ENCODE measurements at regions of chr7 and their contacts with region 1.

Region 1: DNA sequence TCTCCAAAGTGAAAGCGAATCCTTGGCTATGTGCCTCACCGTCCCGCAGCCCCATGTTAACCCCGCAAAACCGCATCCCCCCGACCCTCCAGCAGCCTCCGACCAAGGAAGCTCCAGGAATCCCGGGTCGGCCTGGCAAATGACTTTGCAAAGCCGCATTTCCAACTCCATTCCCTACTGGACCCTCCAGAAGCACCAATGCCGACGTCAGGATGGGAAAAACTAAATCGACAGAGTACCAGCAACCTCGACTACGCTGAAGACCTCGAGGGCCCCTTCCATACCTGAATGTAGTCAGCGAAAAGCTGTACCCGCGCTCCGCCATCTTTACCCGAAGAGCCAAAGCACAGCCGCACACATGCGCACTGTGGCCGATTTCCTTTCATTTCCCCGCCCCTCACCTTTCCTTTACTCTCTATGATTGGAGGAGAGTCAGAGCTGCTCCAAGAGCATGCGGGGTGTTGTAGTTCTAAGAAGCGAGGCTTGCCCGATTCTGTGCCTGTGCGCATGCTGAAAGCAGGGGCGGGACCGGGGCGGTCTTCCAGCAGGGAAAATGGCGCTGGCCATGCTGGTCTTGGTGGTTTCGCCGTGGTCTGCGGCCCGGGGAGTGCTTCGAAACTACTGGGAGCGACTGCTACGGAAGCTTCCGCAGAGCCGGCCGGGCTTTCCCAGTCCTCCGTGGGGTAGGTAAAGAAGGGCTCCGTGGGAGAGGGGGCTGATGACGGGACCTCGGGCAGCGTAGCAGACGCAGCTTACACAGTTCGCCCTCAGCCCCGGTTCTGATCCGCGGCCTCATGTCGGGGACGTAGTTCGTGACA is at the starts of genes MRPL32 and PSMA2:
- DNase-seq: peak; percentile 91 to 97 (median 96)
- H3K4me3 ChIP-seq: peak within 1 kb of the TSS; percentile 58 to 100 (median 91)
- H3K27ac ChIP-seq: peak within 1 kb of the TSS in 53 of 59 donors; percentile 2 to 92 (median 77)
- H3K27me3 ChIP-seq: no peaks in the 10 kb centered on the region
- CTCF ChIP-seq: peak in 25 of 56 donors; percentile 7 to 56 (median 24)
- total RNA-seq, gene MRPL32: 17.8 to 51.0 (median 35.6) TPM
- total RNA-seq, gene PSMA2: 17.0 to 46.6 (median 32.7) TPM

Region 2: DNA sequence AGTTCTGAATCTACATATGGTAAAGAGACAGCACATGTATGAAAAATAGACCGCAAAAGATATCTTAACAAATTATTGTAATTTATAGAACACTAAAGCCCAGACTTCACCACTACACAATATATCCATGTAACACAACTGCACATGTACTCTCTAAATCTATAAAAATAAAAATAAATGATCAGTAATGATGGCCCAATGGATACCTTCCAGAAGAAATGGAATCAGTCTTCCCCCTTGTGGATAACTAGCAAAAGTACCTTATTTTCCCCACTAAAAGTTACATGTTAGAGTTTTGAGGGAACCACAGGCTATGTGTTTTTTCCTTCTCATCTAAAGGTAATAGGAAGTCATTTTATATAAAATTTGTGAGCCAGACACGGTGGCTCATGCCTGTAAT is 45.9 kb before region 1 on chr7:
- intact Hi-C with region 1: no loop called
- DNase-seq: no peak
- H3K4me3 ChIP-seq: no peak overlapping the region
- H3K27ac ChIP-seq: no peak overlapping the region
- H3K27me3 ChIP-seq: no peaks in the 10 kb centered on the region
- CTCF ChIP-seq: peak in 39 of 56 donors; percentile 9 to 51 (median 30)

Region 3: DNA sequence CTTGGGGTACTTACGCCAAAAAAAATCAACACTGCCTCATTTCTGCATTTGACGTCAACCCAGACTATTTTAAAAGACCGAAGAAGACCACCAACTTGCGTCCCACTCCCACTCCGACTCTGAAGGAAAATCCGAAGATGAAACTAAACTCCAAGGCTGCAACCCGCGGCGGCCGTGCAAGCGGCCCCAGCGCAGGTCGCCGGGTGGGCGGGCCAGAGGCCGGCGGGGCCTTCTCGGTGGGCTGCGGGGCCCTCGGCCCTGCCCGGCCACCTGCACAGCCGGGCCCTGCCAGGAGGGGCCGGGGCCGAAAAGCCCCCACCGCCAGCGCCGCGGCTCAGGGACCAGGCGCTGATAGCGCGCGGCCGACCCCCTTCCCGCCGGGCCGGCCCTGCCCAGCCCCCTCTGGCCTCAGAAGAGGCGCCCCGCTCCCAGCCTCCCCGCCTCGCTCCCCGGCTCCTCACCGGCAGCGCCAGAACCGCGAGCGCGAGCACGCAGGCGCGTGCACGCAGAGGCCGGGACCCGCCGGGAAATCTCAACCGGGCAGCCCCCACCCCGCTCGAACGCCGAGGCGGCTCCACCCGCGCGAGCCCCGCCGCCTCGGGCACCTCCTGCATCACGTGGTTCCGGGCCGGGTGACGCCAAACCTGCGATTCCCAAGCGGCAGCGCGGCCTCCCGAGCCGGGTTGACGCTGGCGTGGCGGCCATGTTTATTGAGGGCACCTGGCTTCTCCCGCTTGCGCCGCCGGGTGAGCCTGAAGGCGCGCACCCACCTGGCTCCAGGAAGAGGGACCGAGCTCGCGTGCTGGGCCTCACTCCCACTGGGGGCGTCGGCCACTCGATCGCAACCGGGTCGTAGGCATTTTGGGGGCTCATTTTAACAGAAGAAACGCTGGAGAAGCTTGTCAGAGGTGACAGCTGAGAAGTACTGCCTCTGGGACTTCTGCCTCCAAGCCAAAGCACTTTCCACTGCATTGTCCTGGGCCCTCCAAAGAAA is 20.3 kb before region 1 on chr7 and contains the start of gene C7orf25:
- intact Hi-C with region 1: loop called (anchors 1 kb)
- DNase-seq: peak; percentile 94 to 99 (median 98)
- H3K4me3 ChIP-seq: peak within 1 kb of the TSS; percentile 49 to 98 (median 79)
- H3K27ac ChIP-seq: peak within 1 kb of the TSS; percentile 5 to 93 (median 84)
- H3K27me3 ChIP-seq: no peaks in the 10 kb centered on the region
- CTCF ChIP-seq: peak in 35 of 56 donors; percentile 6 to 61 (median 33)
- total RNA-seq, gene C7orf25: 6.9 to 25.1 (median 13.1) TPM

Region 4: DNA sequence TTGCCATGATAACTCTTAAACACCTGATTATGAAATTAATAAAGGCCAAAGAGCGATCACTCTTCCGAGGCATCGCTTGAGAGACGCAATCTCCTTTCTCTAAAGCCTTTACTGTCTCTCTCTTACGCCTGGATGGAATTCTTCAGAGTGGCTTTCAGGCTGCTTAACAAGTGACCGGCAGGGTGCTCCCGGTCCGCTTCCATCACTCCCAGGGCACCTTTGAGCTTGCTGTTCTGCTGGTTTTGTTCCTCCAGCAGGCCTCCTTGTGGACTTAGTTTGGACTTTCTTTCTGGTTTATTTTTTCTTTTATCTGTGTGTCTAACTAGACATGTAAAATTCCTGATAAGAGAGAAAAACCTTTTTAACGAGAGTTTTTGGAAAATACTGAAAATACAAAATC is 61.0 kb after region 1 on chr7:
- intact Hi-C with region 1: no loop called
- DNase-seq: no peak
- H3K4me3 ChIP-seq: no peak overlapping the region
- H3K27ac ChIP-seq: no peak overlapping the region
- H3K27me3 ChIP-seq: no peaks in the 10 kb centered on the region
- CTCF ChIP-seq: no peak

Region 5: GRCh38 chr7:43112941-43113621 is 181.0 kb after region 1 on chr7:
- intact Hi-C with region 1: loop called in 1 of 2 experiments (anchors 5 kb)
- DNase-seq: peak in 3 of 10 donors; percentile 21 to 51 (median 37)
- H3K4me3 ChIP-seq: peak overlapping the region; percentile 43 to 79 (median 69)
- H3K27ac ChIP-seq: peak overlapping the region in 57 of 59 donors; percentile 24 to 92 (median 83)
- H3K27me3 ChIP-seq: peaks cover 0 to 74% (median 27%) of the 10 kb centered on the region in 45 donors
- CTCF ChIP-seq: no peak

Region 6: GRCh38 chr7:43394441-43395130 is 462.5 kb after region 1 on chr7:
- intact Hi-C with region 1: no loop called
- DNase-seq: no peak
- H3K4me3 ChIP-seq: no peak overlapping the region
- H3K27ac ChIP-seq: no peak overlapping the region
- H3K27me3 ChIP-seq: no peaks in the 10 kb centered on the region
- CTCF ChIP-seq: no peak

Region 7: GRCh38 chr7:43454936-43455518 is 523.0 kb after region 1 on chr7:
- intact Hi-C with region 1: loop called in 1 of 2 experiments (anchors 10 kb)
- DNase-seq: no peak
- H3K4me3 ChIP-seq: peak overlapping the region in 16 of 59 donors; percentile 2 to 34 (median 17)
- H3K27ac ChIP-seq: peak overlapping the region in 2 of 59 donors; percentile 9 to 33
- H3K27me3 ChIP-seq: no peaks in the 10 kb centered on the region
- CTCF ChIP-seq: peak; percentile 32 to 75 (median 59)